Panc1 (cell line): ENCODE measurements at regions of chr22 and their contacts with region 1.

Region 1: DNA sequence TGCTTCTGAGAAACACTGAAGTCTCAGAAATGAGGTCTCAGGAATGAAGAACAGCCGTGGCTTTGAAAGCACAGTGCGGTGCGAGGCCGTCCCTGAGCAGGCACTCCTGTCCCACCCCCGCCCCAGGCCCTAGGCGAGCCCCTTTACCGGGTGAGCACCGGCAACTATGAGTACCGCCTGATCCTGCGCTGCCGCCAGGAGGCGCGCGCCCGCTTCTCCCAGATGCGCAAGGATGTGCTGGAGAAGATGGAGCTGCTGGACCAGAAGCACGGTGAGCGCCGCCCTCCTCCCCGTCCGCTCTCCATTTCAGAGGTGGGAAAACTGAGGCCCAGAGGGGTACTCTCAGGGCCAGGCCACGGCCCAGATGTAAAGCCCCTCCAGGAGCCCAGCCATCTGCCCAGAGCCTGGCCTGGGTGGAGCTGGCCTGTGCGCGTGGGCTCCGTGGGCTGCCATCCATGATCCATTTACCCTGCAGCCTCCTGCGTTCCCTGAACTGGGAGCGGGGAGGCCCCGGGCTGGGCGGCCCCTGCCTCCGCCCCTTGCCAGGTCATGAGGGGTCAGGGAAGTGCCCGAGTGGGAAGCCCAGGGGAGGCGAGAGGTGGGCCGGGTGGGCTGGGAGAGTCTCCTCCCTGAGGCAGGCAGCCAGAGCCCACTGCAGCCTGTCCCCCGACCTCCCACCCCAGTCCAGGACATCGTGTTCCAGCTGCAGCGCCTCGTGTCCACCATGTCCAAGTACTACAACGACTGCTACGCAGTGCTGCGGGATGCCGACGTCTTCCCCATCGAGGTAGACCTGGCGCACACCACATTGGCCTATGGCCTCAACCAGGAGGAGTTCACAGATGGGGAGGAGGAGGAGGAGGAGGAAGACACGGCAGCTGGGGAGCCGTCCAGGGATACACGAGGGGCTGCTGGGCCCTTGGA is 9.5 kb downstream of the SLC16A8 start:
- DNase-seq: no peak
- ATAC-seq: no peak
- H3K4me3 ChIP-seq: no peak overlapping the region
- H3K27ac ChIP-seq: no peak overlapping the region
- H3K4me1 ChIP-seq: no peaks in the 10 kb centered on the region
- H3K27me3 ChIP-seq: no peaks in the 10 kb centered on the region
- CTCF ChIP-seq: no peak

Region 2: GRCh38 chr22:38017272-38017920 is 57.0 kb before region 1 on chr22:
- CTCF ChIA-PET with region 1: no interaction called
- POLR2A ChIA-PET with region 1: no interaction called
- in situ Hi-C with region 1: no loop called
- intact Hi-C with region 1: no loop called
- DNase-seq: no peak
- ATAC-seq: no peak
- H3K4me3 ChIP-seq: no peak overlapping the region
- H3K27ac ChIP-seq: no peak overlapping the region
- H3K4me1 ChIP-seq: no peaks in the 10 kb centered on the region
- H3K27me3 ChIP-seq: no peaks in the 10 kb centered on the region
- CTCF ChIP-seq: no peak

Region 3: DNA sequence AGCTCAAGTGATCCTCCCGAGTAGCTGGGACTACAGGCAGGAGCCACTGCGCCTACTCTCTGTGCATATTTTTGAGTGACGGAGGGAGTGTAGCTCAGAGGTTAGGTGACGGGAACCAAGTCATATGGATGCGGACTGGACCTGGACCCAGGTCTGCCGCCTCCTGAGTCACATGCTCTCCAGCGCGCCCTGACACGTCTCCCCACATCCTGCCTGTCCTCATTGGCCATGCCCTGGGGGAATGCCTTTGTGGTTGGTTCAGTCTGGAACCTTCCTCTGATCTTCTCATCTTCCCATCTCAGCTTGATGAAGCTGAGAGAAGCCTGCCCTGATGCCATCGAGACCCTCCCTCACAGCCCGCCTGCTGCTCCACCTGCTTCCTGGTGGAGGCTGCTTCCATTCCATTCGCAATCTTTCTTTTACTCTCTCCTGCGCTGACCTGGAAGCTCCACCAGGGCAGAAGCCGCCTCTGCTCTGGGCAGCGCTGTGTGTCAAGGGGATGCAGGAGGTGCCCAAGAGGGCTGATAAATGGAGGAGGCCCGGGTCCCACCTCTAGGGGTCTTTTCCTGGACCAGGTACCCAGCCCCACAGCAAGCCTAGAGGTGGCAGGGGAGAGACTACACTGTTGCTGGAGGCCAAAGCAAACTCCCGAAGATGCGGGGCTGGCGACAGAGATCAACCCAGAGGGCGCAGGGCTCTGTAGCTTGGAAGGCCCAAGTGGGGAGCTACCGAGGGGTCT is 50.0 kb after region 1 on chr22:
- CTCF ChIA-PET with region 1: no interaction called
- POLR2A ChIA-PET with region 1: no interaction called
- in situ Hi-C with region 1: no loop called
- intact Hi-C with region 1: no loop called
- DNase-seq: no peak
- ATAC-seq: no peak
- H3K4me3 ChIP-seq: no peak overlapping the region
- H3K27ac ChIP-seq: no peak overlapping the region
- H3K4me1 ChIP-seq: no peaks in the 10 kb centered on the region
- H3K27me3 ChIP-seq: no peaks in the 10 kb centered on the region
- CTCF ChIP-seq: no peak

Region 4: DNA sequence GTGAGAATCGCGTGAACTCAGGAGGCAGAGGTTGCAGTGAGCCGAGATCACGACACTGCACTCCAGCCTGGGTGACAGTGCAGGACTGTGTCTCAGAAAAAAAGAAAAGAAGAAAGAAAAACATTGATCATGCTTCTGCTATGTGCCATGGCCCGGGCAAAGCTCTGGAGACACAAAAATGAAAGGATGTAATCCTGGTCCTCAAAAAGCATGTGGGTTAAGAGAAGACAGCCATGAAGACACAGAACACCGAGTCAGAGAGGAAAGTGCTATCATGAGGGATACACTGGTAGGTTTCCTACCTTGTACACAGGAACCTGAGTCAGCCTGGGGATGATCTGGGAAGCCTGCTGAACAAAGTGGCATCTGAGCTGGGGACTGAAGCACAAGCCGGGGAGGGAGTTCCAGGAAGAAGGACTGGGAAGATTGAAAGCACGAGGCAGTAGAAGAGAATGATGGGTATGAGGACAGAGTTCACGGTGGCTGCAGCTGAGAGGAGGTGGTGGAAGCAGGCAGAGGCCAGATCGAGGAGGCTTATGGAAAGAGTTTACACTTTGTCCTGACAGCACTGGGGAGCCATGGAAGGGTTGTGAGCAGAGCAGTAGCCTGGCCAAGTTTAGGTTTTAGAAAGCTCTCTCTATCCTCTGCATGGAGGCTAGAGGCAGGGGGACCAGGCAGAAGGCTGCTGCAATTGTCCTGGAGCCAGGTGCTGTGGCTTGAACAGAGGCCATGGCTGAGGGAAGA is 117.5 kb after region 1 on chr22:
- CTCF ChIA-PET with region 1: no interaction called
- POLR2A ChIA-PET with region 1: interaction called, 11 read pairs
- in situ Hi-C with region 1: no loop called
- intact Hi-C with region 1: no loop called
- DNase-seq: no peak
- ATAC-seq: no peak
- H3K4me3 ChIP-seq: no peak overlapping the region
- H3K27ac ChIP-seq: no peak overlapping the region
- H3K4me1 ChIP-seq: no peaks in the 10 kb centered on the region
- H3K27me3 ChIP-seq: no peaks in the 10 kb centered on the region
- CTCF ChIP-seq: no peak